Kidney (tissue), 22 donors: ENCODE measurements at regions of chr22 and their contacts with region 1.

Region 1: GRCh38 chr22:50339945-50340879 is 2.9 kb upstream of the PPP6R2 start:
- DNase-seq: no peak
- H3K4me3 ChIP-seq: peak overlapping the region in 1 of 3 donors; percentile 50
- H3K27ac ChIP-seq: no peak overlapping the region
- H3K4me1 ChIP-seq: peaks cover 0 to 6% (median 0%) of the 10 kb centered on the region in 3 donors
- H3K27me3 ChIP-seq: no peaks in the 10 kb centered on the region
- CTCF ChIP-seq: no peak

Region 2: GRCh38 chr22:50260801-50261614 is 79.2 kb before region 1 on chr22:
- intact Hi-C with region 1: loop called (anchors 5 kb)
- DNase-seq: peak in 4 of 5 donors; percentile 44 to 75 (median 60)
- H3K4me3 ChIP-seq: peak overlapping the region; percentile 7 to 39 (median 17)
- H3K27ac ChIP-seq: no peak overlapping the region
- H3K4me1 ChIP-seq: peaks cover 0 to 9% (median 6%) of the 10 kb centered on the region in 3 donors
- H3K27me3 ChIP-seq: no peaks in the 10 kb centered on the region
- CTCF ChIP-seq: no peak